Heart left ventricle (tissue), 16 donors: ENCODE measurements at regions of chr13 and their contacts with region 1.

Region 1: DNA sequence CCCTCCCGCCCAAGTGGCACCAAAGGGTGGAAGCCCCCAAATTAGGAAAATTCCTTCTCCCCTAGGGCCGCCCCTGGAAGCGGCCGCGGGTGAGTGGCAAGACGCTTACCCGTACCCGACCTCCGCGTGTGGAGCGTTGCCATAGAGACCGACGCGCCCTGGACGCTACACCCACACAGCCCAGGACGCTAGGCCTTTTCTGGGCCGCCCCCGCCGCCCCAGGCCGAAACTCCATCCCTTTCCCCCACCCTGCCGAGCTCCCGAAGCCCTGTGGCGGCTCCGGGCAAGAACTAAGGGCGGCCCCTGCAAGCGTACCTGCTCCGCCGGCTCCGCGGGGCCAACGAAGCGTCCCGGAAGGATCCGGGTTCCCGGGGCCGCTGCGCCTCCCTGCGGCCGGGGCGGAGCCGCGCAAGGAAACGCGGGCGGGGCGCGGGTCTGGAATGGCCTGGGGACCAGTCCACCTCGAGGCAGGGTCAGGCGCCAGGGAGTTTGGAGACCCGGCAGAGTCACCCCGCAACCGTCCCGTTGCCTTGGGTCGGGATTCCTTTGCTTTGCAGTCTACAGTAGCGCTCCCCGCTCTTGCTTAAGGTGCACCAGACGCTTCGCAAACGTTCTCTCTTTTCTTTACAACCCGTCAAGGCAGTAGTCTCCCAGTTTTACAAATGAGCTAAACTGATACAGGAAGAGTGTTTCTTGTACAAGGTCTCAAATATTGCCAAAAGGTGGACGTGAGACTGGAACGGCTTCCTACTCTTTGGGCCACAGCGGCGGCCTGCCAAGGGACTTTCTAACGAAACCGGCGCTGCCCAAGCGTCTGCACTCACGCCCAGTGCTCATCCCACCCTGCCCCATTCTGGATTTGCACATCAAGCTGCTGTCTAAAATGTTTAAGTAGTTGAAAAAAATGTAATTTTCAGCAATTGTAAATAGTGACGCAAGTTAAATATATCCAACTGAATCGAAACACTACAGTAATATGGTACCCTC is at the start of gene NEK5:
- DNase-seq: peak; percentile 57 to 86 (median 66)
- ATAC-seq: peak; percentile 74 to 94 (median 89)
- H3K4me3 ChIP-seq: peak within 1 kb of the TSS; percentile 62 to 85 (median 75)
- H3K27ac ChIP-seq: peak within 1 kb of the TSS in 5 of 12 donors; percentile 1 to 48 (median 34)
- H3K4me1 ChIP-seq: peaks cover 0 to 23% (median 12%) of the 10 kb centered on the region in 12 donors
- H3K27me3 ChIP-seq: no peaks in the 10 kb centered on the region
- CTCF ChIP-seq: peak; percentile 60 to 88 (median 80)
- POLR2A ChIP-seq: no peak
- total RNA-seq, gene NEK5: 0.28 to 1.1 (median 0.61) TPM in 6 of 9 donors, not detected in the others

Region 2: GRCh38 chr13:51599444-51600176 is 529.4 kb before region 1 on chr13:
- intact Hi-C with region 1: no loop called
- DNase-seq: no peak
- ATAC-seq: no peak
- H3K4me3 ChIP-seq: no peak overlapping the region
- H3K27ac ChIP-seq: peak overlapping the region in 1 of 12 donors; percentile 12
- H3K4me1 ChIP-seq: peaks cover 0 to 58% (median 0%) of the 10 kb centered on the region in 12 donors
- H3K27me3 ChIP-seq: no peaks in the 10 kb centered on the region
- CTCF ChIP-seq: no peak
- POLR2A ChIP-seq: no peak

Region 3: DNA sequence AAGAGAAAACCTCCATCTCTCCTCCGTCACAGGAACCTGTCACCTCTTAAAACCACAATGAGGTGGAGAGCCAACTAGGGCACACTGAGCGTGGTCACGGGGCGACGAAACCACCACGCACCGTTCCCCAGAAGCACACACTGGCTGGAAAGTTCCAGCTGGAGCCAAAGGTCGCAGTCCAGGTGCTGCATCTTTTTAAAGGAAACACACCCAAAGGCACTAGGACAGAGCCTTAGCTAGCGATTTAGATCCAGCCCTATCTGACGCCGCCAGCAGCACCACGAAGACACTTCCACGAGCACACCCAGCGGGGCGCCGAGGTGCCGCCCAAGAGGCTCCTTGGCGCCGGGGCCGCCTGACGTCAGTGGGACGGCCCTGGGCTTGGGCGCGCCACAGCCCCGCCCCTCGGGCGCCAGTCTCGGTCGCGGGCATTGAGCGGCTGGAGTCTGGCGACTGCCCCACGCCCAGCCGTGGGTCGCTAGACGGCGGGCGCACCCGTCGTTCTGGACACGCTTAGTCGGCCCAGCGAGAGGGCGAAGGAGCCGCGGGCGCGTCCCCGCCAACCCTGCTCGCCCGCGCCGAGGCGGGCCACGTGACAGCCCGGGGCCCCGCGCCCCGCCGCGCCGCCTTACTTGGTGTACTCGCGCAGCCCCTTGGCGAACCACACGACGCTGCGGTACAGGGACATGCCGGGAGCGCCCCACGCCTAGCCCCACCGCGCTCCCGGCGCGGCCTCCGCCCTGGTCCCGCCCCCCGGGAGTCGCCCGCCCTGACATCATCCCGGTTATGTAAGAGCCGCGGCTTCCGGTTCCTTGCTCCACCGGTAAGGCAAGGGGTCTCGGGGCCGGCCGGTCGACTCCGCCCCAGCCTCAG is 325.3 kb before region 1 on chr13 and contains the start of gene DHRS12:
- intact Hi-C with region 1: no loop called
- DNase-seq: peak; percentile 94 to 96 (median 95)
- ATAC-seq: peak; percentile 70 to 93 (median 88)
- H3K4me3 ChIP-seq: peak within 1 kb of the TSS; percentile 60 to 97 (median 78)
- H3K27ac ChIP-seq: peak within 1 kb of the TSS; percentile 97 to 100 (median 100)
- H3K4me1 ChIP-seq: peaks cover 6 to 62% (median 41%) of the 10 kb centered on the region in 12 donors
- H3K27me3 ChIP-seq: no peaks in the 10 kb centered on the region
- CTCF ChIP-seq: peak in 3 of 12 donors; percentile 6 to 27 (median 19)
- POLR2A ChIP-seq: peak in 1 of 2 donors; percentile 94
- total RNA-seq, gene DHRS12: 4.8 to 13.1 (median 12.1) TPM

Region 4: DNA sequence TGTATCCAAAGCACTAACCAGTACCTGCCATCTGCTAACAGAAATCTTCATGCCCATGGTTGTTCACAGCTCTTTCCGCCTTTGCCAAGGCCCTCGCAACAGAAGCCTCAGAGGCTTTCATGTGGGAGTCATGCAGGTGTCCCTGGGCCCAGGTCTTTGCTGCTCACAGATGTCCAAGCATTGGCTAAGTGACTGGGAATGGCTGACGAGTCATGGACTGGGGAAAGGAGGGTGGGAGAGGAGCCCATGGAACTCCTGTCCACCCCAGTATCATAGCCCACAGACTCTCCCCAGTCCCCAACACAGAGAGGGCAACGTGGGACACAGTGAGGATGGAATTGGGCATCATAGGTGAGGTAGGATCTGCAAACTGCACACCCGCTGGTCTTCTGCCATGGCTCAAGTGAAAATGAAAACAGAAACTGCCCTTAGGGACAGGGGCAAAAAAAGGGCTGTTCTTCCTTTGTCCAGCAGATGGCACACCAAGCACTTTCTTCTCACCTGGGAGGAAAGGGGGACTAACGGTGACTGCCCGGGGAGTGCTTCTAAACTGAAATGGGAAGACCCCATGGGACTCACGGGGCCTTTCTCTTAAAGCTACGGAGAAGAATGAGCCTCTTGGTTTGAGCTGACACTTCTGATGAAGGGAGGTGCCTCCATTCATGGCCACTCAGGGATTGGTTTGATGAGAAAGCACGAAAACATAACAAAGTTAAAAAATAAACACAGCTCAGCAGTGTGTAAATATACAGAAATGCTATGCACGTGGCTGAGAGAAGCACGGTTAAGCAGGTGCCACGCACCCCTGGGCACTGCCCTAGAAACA is 314.0 kb before region 1 on chr13:
- intact Hi-C with region 1: loop called in 9 of 10 experiments (anchors 5 to 10 kb)
- DNase-seq: peak; percentile 45 to 63 (median 60)
- ATAC-seq: peak; percentile 13 to 69 (median 60)
- H3K4me3 ChIP-seq: peak overlapping the region in 9 of 12 donors; percentile 8 to 39 (median 19)
- H3K27ac ChIP-seq: peak overlapping the region in 4 of 12 donors; percentile 17 to 42 (median 22)
- H3K4me1 ChIP-seq: peaks cover 0 to 40% (median 13%) of the 10 kb centered on the region in 12 donors
- H3K27me3 ChIP-seq: no peaks in the 10 kb centered on the region
- CTCF ChIP-seq: peak; percentile 68 to 88 (median 82)
- POLR2A ChIP-seq: no peak

Region 5: DNA sequence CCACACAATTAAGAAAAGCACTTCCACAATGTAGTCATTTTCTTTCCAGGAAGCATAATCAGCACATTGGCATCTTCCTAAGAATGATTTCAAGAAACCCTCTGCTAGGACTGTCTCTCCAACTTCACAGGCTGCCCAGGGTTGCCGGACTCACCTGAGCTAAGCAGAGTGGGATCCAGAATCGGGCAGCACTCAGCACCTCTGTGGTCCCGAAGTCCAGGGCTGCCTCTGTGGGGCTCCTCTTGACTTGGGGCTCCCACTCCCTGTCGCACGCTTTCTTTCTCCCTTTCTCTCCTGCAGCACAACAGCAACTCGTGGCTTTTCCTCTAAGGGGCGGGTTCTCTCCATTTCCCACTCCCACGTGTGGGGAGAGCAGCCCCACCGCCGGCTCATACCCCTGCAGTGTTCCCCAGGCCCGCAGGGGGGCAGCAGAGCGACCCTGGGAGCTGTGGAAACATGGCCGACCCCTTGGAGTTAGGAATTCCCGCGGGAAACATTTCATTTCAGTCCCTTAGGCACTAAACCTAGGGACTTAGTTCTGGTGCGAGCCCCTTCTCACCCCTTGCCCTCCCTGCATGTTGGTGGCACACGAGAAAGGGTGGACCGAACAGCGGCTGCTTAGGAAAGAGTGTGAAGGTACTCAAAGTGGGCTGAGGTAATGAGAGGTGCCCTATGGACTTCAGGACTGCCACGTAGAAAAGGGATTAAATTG is 284.0 kb before region 1 on chr13 and contains the start of gene TMEM272:
- intact Hi-C with region 1: loop called in 2 of 10 experiments (anchors 5 to 10 kb)
- DNase-seq: peak in 4 of 5 donors; percentile 34 to 75 (median 45)
- ATAC-seq: peak in 3 of 4 donors; percentile 79 to 91 (median 82)
- H3K4me3 ChIP-seq: peak within 1 kb of the TSS in 1 of 12 donors; percentile 26
- H3K27ac ChIP-seq: no peak within 1 kb of the TSS
- H3K4me1 ChIP-seq: peaks cover 0 to 16% (median 0%) of the 10 kb centered on the region in 12 donors
- H3K27me3 ChIP-seq: peaks cover 0 to 5% (median 0%) of the 10 kb centered on the region in 9 donors
- CTCF ChIP-seq: peak; percentile 73 to 95 (median 86)
- POLR2A ChIP-seq: no peak
- total RNA-seq, gene TMEM272: 0.14 to 1.6 (median 0.45) TPM in 8 of 9 donors, not detected in the other

Region 6: GRCh38 chr13:51895906-51896888 is 232.8 kb before region 1 on chr13:
- intact Hi-C with region 1: loop called (anchors 1 to 5 kb)
- DNase-seq: peak in 4 of 5 donors; percentile 40 to 65 (median 50)
- ATAC-seq: peak; percentile 76 to 90 (median 88)
- H3K4me3 ChIP-seq: no peak overlapping the region
- H3K27ac ChIP-seq: no peak overlapping the region
- H3K4me1 ChIP-seq: no peaks in the 10 kb centered on the region
- H3K27me3 ChIP-seq: no peaks in the 10 kb centered on the region
- CTCF ChIP-seq: peak; percentile 52 to 80 (median 66)
- POLR2A ChIP-seq: no peak

Region 7: DNA sequence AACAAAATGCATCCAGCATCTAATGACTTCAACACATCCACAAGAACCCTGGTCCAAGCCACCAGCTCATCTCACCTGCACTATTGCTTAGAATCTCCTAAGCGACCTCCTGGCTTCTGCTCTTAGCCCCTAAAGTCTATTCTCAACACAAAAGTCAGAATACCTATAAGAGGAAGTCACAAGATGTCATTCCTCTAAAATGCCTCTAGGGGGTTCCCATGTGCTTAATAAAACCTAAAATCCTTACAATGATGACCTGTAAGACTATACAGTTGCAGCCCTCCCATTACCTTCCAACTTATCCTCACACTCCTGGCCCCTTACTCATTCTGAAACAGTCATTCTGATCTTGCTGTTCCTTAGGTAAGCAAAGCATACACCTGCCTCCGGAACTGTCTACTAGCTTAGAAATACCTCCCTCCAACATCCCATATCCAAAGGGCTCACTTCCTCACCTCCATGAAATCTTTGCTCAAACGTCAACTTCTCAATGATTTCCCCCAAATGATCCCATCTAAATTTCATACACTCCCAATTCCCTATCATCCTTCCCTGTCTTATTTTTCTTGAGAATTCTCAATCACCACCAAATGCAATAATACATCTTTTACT is 127.8 kb before region 1 on chr13:
- intact Hi-C with region 1: loop called (anchors 1 to 5 kb)
- DNase-seq: no peak
- ATAC-seq: peak in 3 of 4 donors; percentile 36 to 48 (median 40)
- H3K4me3 ChIP-seq: no peak overlapping the region
- H3K27ac ChIP-seq: no peak overlapping the region
- H3K4me1 ChIP-seq: peaks cover 0 to 25% (median 5%) of the 10 kb centered on the region in 12 donors
- H3K27me3 ChIP-seq: no peaks in the 10 kb centered on the region
- CTCF ChIP-seq: peak; percentile 52 to 83 (median 69)
- POLR2A ChIP-seq: no peak

Region 8: DNA sequence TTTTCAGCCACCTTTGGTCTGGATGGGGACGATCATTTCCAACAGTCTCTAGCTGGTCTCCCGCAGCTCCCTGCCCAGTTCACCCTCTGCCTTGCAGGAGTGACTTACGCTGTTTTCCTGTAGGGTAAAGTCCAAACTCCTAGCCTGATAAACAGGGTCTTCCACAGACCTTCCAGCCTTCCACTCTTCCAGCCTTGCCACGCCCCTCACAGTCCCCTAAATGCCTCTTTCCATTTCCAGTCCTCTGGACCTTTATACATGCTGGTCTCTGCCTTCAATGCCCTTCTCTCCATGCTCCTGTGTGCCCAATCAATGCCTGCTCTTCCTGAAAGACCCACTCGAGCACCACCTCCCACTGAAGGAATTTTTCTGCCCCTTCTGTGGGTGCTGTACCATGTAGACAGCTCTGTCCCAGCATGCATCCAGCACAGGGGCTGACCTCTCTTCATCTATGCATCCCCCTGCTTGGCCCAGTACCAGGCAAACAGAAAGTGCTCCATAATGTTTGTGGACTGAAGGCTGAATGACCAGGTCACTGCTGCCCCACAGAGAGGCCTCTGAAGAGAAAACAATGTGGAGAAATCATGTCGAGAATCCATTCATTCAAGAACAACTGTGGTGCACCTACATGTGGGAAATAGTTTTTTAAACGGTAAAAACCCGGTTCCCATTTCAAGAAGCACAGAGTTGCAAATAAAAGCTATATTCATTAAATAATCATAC is 122.3 kb before region 1 on chr13:
- intact Hi-C with region 1: loop called (anchors 1 to 5 kb)
- DNase-seq: no peak
- ATAC-seq: no peak
- H3K4me3 ChIP-seq: no peak overlapping the region
- H3K27ac ChIP-seq: no peak overlapping the region
- H3K4me1 ChIP-seq: peaks cover 0 to 17% (median 9%) of the 10 kb centered on the region in 12 donors
- H3K27me3 ChIP-seq: peaks cover 0 to 9% (median 0%) of the 10 kb centered on the region in 9 donors
- CTCF ChIP-seq: no peak
- POLR2A ChIP-seq: no peak

Region 9: GRCh38 chr13:52070929-52071523 is 58.0 kb before region 1 on chr13:
- intact Hi-C with region 1: loop called in 3 of 10 experiments (anchors 5 kb)
- DNase-seq: no peak
- ATAC-seq: peak in 2 of 4 donors; percentile 52 to 57
- H3K4me3 ChIP-seq: no peak overlapping the region
- H3K27ac ChIP-seq: no peak overlapping the region
- H3K4me1 ChIP-seq: no peaks in the 10 kb centered on the region
- H3K27me3 ChIP-seq: no peaks in the 10 kb centered on the region
- CTCF ChIP-seq: peak in 4 of 12 donors; percentile 21 to 40 (median 28)
- POLR2A ChIP-seq: no peak

Region 10: DNA sequence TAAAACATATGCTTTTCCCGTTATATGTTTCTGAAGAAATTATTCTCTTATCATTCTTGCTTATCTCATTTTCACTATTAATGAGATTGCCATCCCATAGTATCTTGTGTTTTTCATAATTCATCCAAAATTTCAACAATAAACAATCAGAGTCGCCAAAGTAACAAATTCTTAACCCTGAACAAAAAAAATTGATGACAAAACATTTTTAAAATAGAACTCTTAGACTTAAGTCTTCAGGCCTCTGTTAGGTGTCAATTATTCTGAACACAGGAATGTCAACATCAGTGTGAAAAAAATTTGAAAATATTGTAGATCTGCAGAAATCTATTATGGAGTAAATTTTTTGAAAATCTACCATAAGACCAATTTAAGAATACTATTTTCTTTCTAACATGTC is 37.5 kb before region 1 on chr13:
- intact Hi-C with region 1: no loop called
- DNase-seq: no peak
- ATAC-seq: no peak
- H3K4me3 ChIP-seq: no peak overlapping the region
- H3K27ac ChIP-seq: no peak overlapping the region
- H3K4me1 ChIP-seq: no peaks in the 10 kb centered on the region
- H3K27me3 ChIP-seq: no peaks in the 10 kb centered on the region
- CTCF ChIP-seq: no peak
- POLR2A ChIP-seq: no peak

Region 11: DNA sequence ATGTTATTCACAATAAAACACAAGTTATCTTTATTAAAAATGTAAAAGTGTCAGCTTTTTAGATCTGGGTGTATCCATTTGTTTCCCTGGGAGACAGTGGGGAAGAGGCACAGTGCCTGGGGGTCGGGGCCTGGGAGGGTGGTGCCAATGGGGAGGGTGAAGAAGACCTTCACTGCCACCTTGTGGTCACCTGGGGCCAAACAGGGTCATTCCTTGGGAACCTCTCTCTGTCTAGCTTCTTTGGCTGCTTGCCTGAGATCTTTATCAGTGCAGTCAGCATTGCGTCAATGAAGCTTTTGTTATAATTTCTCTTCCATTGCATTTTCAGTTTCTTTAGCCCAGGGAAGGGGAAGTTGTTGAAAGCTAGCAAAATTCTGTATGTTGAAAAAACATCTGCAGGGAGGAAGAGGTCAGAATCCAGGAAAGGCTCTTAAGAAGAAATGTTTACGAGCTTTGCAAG is 680.3 kb after region 1 on chr13:
- intact Hi-C with region 1: no loop called
- DNase-seq: peak in 4 of 5 donors; percentile 37 to 70 (median 54)
- ATAC-seq: peak in 3 of 4 donors; percentile 49 to 91 (median 53)
- H3K4me3 ChIP-seq: no peak overlapping the region
- H3K27ac ChIP-seq: no peak overlapping the region
- H3K4me1 ChIP-seq: peaks cover 0 to 8% (median 0%) of the 10 kb centered on the region in 12 donors
- H3K27me3 ChIP-seq: peaks cover 0 to 6% (median 0%) of the 10 kb centered on the region in 9 donors
- CTCF ChIP-seq: peak; percentile 38 to 70 (median 56)
- POLR2A ChIP-seq: no peak